CD4-positive, alpha-beta memory T cell (primary cell): ENCODE measurements at regions of chr14 and their contacts with region 1.

Region 1: GRCh38 chr14:35046048-35046741 is at the start of gene FAM177A1:
- DNase-seq: peak; percentile 98 to 100 (median 99)
- H3K4me3 ChIP-seq: peak within 1 kb of the TSS; percentile 76 to 92
- H3K4me3 Mint-ChIP-seq: peak within 1 kb of the TSS; percentile 87 to 100 (median 96)
- H3K27ac ChIP-seq: peak within 1 kb of the TSS; percentile 98
- H3K27ac Mint-ChIP-seq: peak within 1 kb of the TSS; percentile 95 to 100 (median 99)
- H3K4me1 ChIP-seq: peaks cover 24% of the 10 kb centered on the region
- H3K4me1 Mint-ChIP-seq: peaks cover 19 to 38% (median 30%) of the 10 kb centered on the region in 4 donors
- H3K27me3 ChIP-seq: no peaks in the 10 kb centered on the region
- H3K27me3 Mint-ChIP-seq: no peaks in the 10 kb centered on the region
- total RNA-seq, gene FAM177A1: 35.2 to 41.5 TPM

Region 2: DNA sequence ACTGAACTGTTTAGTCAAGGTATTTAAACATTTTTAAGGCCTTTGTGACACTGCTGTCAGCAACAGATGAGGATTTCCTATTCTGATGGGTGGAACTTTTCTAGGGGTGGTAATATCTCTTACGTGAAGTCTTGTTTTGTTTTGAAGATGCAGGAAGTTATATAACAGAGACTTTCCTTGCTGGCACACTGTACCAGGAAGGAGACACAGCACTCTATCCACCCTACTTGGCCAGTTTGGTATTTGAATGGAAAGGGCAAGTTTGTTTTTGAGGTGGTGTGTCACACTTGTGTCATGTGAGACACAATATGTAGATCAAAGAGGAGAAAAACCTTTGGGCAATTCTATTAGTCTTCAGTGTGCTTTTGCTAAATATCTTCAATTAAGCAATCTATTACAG is 115.0 kb before region 1 on chr14:
- CTCF ChIA-PET with region 1: no interaction called
- POLR2A ChIA-PET with region 1: interaction called, 8 read pairs
- intact Hi-C with region 1: loop called (anchors 2 kb)
- DNase-seq: peak; percentile 78 to 85 (median 84)
- H3K4me3 ChIP-seq: peak overlapping the region in 1 of 2 donors; percentile 53
- H3K4me3 Mint-ChIP-seq: peak overlapping the region; percentile 42 to 79 (median 50)
- H3K27ac ChIP-seq: peak overlapping the region; percentile 79
- H3K27ac Mint-ChIP-seq: peak overlapping the region; percentile 90 to 100 (median 98)
- H3K4me1 ChIP-seq: peaks cover 34% of the 10 kb centered on the region
- H3K4me1 Mint-ChIP-seq: peaks cover 22 to 37% (median 30%) of the 10 kb centered on the region in 4 donors
- H3K27me3 ChIP-seq: no peaks in the 10 kb centered on the region
- H3K27me3 Mint-ChIP-seq: no peaks in the 10 kb centered on the region

Region 3: DNA sequence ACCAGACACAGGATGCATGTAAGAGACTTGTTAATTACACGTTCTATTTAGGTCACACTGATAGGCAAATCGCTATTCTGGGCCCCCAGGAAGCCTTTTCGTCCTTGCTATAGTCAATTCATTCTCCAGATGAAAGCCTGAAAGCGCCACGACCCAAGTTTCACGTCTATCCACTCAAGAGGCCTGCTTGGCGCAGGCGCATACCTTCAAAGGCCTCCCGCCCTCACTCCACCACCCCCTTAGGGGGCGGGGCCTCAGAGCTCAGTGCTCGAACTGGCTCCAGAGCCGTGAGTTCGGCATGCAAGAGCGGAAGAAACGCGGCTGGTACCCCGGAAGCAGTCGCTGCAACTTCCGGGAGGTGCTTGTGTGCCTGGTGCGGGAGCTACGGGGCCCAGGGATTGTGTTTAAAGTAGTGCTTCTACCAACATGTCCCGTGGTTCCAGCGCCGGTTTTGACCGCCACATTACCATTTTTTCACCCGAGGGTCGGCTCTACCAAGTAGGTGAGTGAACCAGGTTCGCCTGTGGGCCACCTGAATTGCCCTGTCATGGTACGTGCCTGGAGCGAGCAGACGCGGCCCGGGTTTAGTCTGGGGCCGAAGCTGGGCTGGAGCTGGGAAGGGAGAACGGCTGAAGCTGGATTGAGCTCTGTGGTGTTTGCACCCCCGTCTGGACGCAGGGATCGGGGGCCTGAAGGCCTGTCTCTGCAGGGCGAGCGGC is 246.0 kb after region 1 on chr14 and contains the start of gene PSMA6:
- CTCF ChIA-PET with region 1: no interaction called
- POLR2A ChIA-PET with region 1: interaction called, 12 read pairs
- intact Hi-C with region 1: loop called (anchors 1 kb)
- DNase-seq: peak; percentile 98 to 100 (median 99)
- H3K4me3 ChIP-seq: peak within 1 kb of the TSS; percentile 77 to 91
- H3K4me3 Mint-ChIP-seq: peak within 1 kb of the TSS; percentile 93 to 99 (median 98)
- H3K27ac ChIP-seq: peak within 1 kb of the TSS; percentile 97
- H3K27ac Mint-ChIP-seq: peak within 1 kb of the TSS; percentile 96 to 99 (median 98)
- H3K4me1 ChIP-seq: peaks cover 48% of the 10 kb centered on the region
- H3K4me1 Mint-ChIP-seq: peaks cover 30 to 65% (median 43%) of the 10 kb centered on the region in 4 donors
- H3K27me3 ChIP-seq: no peaks in the 10 kb centered on the region
- H3K27me3 Mint-ChIP-seq: no peaks in the 10 kb centered on the region
- total RNA-seq, gene PSMA6: 84.6 to 86.2 TPM

Region 4: GRCh38 chr14:35808076-35808652 is 762.0 kb after region 1 on chr14:
- CTCF ChIA-PET with region 1: no interaction called
- POLR2A ChIA-PET with region 1: no interaction called
- intact Hi-C with region 1: loop called (anchors 1 kb)
- DNase-seq: peak in 3 of 5 donors; percentile 4 to 57 (median 11)
- H3K4me3 ChIP-seq: peak overlapping the region; percentile 45 to 81
- H3K4me3 Mint-ChIP-seq: peak overlapping the region; percentile 94 to 99 (median 98)
- H3K27ac ChIP-seq: peak overlapping the region; percentile 84
- H3K27ac Mint-ChIP-seq: peak overlapping the region; percentile 89 to 99 (median 98)
- H3K4me1 ChIP-seq: peaks cover 23% of the 10 kb centered on the region
- H3K4me1 Mint-ChIP-seq: peaks cover 19 to 47% (median 34%) of the 10 kb centered on the region in 4 donors
- H3K27me3 ChIP-seq: no peaks in the 10 kb centered on the region
- H3K27me3 Mint-ChIP-seq: no peaks in the 10 kb centered on the region